ENCODE measurements at regions of chr15 and their contacts with region 1.

Region 1: DNA sequence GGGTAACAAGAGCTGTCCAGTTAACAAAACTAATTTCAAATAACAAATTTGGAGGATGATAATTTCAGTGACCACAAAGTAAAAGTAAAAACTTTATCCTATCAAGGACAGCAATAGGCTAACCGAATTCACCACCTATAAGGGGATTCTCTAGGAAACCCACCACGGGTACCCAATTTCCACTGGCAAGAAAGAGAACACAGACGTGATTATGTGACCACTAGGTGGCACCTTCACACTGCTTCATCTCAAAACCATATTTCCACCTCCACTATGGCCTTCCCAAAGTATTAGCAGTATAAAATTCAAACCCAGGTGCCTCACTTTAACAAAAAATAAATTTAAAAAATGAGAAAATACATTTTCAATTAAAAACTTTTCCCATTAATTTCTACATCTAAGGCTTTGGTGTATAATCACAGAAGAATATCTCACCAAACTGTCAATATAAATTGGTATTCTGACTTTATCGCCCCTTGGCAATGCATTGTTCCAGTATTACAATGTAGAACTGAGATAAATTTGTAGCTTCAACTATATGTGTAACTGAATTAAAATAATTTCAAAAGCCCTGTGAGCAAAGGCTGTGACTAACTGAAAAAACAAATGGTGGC is 96.5 kb downstream of the FSIP1 start:
- DNase-seq: peak; percentile 13
- ATAC-seq: peak; percentile 84
- H3K4me3 ChIP-seq: no peak overlapping the region
- H3K27ac ChIP-seq: no peak overlapping the region
- H3K4me1 ChIP-seq: no peaks in the 10 kb centered on the region
- H3K27me3 ChIP-seq: no peaks in the 10 kb centered on the region
- CTCF ChIP-seq: peak; percentile 84

Region 2: DNA sequence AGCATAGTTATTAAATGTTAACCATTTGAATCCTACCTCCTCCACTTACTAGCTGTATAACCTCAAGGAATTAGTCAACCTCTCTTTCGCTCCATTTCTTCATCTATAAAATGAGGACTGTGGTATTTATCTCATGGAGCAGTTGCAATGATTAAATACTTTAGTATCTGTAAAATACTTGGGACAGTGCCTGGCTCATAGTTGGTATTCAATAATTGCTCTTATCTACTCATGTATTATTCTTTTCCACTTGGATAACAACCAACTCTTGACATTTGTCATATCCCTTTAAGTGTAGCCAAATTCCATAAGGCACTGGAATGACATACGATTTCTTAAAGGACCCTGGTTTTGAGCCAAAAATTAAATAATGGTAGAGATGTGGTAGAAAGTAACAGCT is 24.6 kb after region 1 on chr15:
- CTCF ChIA-PET with region 1: no interaction called
- POLR2A ChIA-PET with region 1: no interaction called
- in situ Hi-C with region 1: no loop called
- intact Hi-C with region 1: loop called (anchors 2 kb)
- DNase-seq: no peak
- ATAC-seq: no peak
- H3K4me3 ChIP-seq: no peak overlapping the region
- H3K27ac ChIP-seq: no peak overlapping the region
- H3K4me1 ChIP-seq: no peaks in the 10 kb centered on the region
- H3K27me3 ChIP-seq: no peaks in the 10 kb centered on the region
- CTCF ChIP-seq: no peak

Region 3: DNA sequence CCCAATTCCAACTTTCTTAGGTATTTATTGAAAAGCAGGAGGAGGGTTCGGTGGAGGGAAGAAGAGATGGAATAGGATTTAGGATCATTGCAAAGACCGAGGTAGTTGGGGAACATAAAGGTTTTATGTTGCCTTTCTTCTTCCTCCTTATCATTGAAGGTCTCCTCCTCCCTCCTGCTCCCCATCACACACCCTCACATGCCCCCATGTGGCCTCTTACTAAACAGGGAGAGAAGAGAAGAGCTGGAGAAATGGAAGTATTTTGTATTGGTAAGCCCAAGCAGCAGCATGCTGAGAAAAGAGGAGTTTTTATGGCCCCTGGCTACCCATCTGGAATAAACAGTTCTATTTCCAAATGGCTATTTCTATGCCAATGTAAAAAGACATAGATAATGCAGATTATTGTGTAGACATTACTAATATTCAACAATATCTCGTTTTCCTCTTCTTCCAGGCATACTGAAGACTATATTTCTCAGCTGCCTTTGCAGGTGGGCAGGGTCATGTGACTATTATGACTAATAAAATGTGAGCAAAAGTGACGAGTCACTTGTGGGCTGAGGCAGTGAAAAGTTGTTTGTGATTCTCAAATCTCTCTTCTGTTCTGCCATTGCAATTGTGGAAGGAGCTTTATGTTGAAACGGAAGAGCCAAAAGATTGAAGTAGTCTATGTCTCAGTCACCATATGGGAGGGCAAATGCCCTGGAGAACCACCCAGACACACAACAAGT is 239.2 kb after region 1 on chr15:
- CTCF ChIA-PET with region 1: no interaction called
- POLR2A ChIA-PET with region 1: no interaction called
- in situ Hi-C with region 1: no loop called
- intact Hi-C with region 1: loop called (anchors 5 kb)
- DNase-seq: no peak
- ATAC-seq: no peak
- H3K4me3 ChIP-seq: no peak overlapping the region
- H3K27ac ChIP-seq: no peak overlapping the region
- H3K4me1 ChIP-seq: no peaks in the 10 kb centered on the region
- H3K27me3 ChIP-seq: no peaks in the 10 kb centered on the region; the same call in 1 of the 2 replicates
- CTCF ChIP-seq: no peak

Measured in Panc1 (cell line).